ENCODE measurements at regions of chr2 and their contacts with region 1.

Region 1: DNA sequence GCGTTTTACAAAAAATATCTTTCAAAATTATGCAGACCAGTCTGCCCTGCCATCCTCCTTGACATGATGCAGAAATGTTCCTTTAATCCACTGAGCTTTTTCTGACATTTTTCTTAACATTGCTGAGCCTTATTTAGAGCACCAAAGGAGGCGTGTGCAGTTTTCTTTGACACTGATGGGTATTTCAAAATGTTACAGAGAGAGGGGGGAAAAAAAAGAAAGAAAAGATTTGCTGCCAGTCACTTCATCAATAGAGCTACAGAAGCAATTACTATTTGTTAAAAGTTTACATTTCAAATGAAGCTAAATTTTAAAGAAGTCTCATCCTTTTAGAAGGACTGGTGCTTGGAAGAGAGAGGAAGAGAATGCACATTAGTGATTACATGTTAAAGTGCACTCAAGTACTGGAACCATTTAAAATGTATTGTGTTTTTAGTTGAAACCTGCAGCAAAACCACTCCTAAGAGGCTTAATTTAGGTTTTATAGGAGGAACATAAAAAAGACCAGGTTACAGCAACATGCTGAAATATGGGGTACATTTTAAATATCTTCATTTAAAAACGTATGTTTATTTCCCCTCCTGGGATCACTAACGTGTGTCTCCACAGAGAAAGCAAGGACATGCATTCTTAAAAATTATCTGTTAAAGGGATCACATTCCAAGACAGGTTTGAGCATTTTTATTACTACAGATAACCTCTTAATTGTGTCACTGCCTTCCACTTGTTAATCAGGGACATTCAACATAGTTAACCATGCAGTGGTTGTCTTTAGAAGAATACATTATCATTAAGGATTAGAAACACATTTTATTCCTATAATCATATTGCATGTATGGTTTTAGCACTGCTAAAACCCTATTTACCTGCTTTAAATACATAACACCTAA is 258.4 kb downstream of the MEIS1 start:
- DNase-seq: no peak
- H3K4me3 ChIP-seq: peak overlapping the region in 1 of 2 donors; percentile 20
- H3K27ac ChIP-seq: peak overlapping the region; percentile 31 to 58
- H3K4me1 ChIP-seq: no peaks in the 10 kb centered on the region
- H3K27me3 ChIP-seq: no peaks in the 10 kb centered on the region
- CTCF ChIP-seq: no peak
- POLR2A ChIP-seq: no peak

Region 2: GRCh38 chr2:66408905-66409304 is 284.4 kb before region 1 on chr2:
- intact Hi-C with region 1: no loop called
- DNase-seq: no peak
- H3K4me3 ChIP-seq: no peak overlapping the region
- H3K27ac ChIP-seq: no peak overlapping the region
- H3K4me1 ChIP-seq: no peaks in the 10 kb centered on the region
- H3K27me3 ChIP-seq: no peaks in the 10 kb centered on the region
- CTCF ChIP-seq: no peak
- POLR2A ChIP-seq: no peak

Region 3: DNA sequence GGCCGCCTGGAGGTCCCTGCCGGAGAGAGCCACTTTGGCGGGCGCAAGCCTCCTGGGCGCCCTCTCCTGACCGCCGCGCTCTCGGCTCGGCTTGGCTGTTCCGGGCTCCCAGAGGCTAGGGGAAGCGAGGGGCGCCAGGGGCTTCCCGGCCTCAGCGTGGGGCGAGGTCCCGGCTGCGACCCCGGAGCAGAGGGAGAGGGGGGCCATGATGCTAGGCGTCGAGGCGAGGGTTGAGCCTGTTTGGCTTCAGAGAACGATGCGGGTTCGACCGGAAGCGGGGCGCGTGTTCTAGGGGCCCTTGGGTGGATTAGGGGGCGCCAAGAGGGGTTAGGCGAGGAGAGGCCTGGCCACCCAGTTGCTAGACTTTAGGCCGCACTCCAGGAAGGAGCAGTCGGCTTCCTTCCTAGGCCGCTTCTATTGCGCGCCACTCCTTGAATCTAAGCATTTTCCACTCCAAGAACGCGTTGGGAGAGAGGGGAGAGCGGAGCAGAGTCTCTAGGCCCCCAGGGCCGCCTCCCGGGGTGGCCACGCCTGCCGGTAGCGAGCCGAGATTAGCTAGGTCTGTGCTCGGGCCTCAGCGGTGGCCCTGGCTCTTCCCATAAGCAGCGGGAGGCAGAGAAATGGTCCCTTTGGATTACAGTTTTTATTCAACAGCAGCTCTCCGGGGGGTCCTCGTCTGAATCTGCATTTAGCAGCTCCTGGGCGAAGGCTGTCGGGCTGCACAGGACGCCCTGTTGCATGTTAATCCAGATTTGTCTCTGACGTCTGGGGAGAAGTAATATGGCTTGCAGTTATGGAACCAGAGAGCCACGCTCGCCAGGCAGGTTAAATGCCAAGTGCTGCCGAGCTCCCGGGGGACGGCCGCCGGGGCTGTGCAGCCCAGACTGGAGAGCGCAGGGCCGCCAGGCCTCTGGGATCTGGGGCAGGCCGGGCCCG is 247.1 kb before region 1 on chr2:
- intact Hi-C with region 1: loop called (anchors 2 kb)
- DNase-seq: no peak
- H3K4me3 ChIP-seq: peak overlapping the region; percentile 31
- H3K27ac ChIP-seq: peak overlapping the region; percentile 85 to 87
- H3K4me1 ChIP-seq: no peaks in the 10 kb centered on the region
- H3K27me3 ChIP-seq: peaks cover 4% of the 10 kb centered on the region
- CTCF ChIP-seq: no peak
- POLR2A ChIP-seq: no peak

Region 4: GRCh38 chr2:67259581-67260342 is 566.4 kb after region 1 on chr2:
- intact Hi-C with region 1: no loop called
- DNase-seq: no peak
- H3K4me3 ChIP-seq: no peak overlapping the region
- H3K27ac ChIP-seq: peak overlapping the region; percentile 36 to 53
- H3K4me1 ChIP-seq: no peaks in the 10 kb centered on the region
- H3K27me3 ChIP-seq: no peaks in the 10 kb centered on the region
- CTCF ChIP-seq: no peak
- POLR2A ChIP-seq: no peak